GM10248 (cell line): ENCODE measurements at regions of chr6 and their contacts with region 1.

Region 1: DNA sequence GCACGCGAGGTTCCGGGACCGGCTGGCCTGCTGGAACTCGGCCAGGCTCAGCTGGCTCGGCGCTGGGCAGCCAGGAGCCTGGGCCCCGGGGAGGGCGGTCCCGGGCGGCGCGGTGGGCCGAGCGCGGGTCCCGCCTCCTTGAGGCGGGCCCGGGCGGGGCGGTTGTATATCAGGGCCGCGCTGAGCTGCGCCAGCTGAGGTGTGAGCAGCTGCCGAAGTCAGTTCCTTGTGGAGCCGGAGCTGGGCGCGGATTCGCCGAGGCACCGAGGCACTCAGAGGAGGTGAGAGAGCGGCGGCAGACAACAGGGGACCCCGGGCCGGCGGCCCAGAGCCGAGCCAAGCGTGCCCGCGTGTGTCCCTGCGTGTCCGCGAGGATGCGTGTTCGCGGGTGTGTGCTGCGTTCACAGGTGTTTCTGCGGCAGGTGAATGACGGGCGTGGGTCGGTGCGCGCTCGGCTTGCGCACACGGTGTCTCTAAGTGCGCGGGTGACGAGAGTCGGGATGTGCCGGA is at the start of gene CDKN1A:
- DNase-seq: peak; percentile 87
- CTCF ChIP-seq: no peak

Region 2: DNA sequence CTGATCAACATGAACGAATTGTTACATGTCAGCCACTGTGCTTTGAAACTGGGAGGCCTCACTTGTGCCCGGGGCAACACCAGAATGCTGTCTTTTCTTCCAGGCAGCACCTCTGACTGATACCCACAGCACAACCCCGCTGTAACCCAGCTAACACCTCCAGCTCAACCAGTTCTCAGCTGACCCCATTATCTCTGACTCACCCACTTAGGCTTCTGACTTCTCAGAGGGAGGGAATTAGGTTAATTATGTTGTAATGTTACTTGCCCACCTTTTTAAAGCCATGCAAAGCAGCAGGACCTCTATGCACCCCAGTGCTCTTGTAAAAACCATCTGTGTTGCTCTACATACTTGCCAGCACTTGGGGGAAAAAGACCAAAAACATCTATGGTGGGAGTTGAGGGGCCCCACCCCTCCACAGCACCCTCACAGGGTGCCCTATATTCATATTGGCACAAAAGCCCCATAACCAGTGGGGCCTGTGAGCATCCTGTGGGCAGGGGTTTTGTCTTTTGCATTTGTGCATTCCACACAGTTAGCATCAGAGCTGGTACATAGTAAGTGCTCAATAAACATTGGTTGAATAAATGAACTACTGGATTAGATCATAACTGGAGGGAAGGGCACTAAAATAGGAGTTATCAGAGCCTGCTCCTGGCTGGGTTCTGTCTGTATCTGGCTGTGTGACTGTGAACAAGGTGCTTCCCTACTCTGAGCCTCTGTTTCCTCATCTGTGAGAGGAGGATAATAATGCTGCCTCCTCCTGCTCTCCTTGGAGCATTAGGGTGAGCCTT is 364.2 kb before region 1 on chr6:
- CTCF ChIA-PET with region 1: no interaction called
- POLR2A ChIA-PET with region 1: interaction called, 12 read pairs
- DNase-seq: no peak
- CTCF ChIP-seq: no peak

Region 3: DNA sequence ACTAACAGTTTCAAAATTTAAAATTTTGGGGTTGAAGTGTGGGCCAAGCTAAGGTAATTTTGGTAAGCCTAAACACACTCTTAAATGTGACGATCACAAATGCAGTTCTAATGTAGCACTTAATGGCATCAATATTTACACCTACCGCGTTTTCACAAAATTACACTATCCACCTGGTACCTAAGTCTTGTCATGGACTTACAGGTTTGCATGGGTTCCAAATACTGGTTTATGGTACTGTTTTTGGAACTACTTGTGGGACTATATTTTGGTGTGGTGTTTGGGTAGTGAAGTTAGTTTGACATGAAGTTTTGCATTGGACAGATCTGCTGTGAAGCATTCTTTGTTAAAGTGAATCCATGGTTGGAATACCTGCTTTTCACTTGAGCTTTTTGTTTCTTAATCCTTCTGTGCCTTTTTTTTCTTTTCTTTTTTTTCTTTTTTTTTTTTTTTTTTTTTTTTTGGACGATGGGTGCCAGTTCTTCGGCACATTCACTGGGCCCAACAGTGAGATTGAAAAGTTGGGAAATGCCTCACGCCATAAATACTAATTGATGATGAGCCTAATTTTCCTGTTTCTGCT is 77.9 kb before region 1 on chr6:
- CTCF ChIA-PET with region 1: interaction called, 3 read pairs
- POLR2A ChIA-PET with region 1: interaction called, 11 read pairs
- DNase-seq: no peak
- CTCF ChIP-seq: no peak

Region 4: DNA sequence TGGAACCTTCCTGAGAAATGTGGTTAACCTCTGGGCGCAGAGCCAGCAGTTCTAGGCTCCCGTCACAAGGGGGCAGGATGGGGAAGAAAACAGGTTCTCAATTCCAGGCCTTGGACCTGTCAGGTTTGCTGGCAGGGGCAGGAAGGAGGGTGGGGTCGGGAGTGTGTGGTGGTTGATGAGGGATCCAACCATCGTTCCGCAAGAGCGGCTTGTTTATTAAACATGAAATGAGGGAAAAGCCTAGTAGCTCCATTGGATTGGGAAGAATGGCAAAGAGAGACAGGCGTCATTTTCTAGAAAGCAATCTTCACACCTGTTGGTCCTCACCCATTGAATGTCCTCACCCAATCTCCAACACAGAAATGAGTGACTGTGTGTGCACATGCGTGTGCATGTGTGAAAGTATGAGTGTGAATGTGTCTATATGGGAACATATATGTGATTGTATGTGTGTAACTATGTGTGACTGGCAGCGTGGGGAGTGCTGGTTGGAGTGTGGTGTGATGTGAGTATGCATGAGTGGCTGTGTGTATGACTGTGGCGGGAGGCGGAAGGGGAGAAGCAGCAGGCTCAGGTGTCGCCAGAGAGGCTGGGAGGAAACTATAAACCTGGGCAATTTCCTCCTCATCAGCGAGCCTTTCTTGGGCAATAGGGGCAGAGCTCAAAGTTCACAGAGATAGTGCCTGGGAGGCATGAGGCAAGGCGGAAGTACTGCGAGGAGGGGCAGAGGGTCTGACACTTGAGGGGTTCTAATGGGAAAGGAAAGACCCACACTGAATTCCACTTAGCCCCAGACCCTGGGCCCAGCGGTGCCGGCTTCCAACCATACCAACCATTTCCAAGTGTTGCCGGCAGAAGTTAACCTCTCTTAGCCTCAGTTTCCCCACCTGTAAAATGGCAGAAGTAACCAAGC is 54.8 kb before region 1 on chr6:
- CTCF ChIA-PET with region 1: interaction called, 55 read pairs
- POLR2A ChIA-PET with region 1: interaction called, 6 read pairs
- DNase-seq: peak; percentile 84
- CTCF ChIP-seq: peak; percentile 91

Region 5: DNA sequence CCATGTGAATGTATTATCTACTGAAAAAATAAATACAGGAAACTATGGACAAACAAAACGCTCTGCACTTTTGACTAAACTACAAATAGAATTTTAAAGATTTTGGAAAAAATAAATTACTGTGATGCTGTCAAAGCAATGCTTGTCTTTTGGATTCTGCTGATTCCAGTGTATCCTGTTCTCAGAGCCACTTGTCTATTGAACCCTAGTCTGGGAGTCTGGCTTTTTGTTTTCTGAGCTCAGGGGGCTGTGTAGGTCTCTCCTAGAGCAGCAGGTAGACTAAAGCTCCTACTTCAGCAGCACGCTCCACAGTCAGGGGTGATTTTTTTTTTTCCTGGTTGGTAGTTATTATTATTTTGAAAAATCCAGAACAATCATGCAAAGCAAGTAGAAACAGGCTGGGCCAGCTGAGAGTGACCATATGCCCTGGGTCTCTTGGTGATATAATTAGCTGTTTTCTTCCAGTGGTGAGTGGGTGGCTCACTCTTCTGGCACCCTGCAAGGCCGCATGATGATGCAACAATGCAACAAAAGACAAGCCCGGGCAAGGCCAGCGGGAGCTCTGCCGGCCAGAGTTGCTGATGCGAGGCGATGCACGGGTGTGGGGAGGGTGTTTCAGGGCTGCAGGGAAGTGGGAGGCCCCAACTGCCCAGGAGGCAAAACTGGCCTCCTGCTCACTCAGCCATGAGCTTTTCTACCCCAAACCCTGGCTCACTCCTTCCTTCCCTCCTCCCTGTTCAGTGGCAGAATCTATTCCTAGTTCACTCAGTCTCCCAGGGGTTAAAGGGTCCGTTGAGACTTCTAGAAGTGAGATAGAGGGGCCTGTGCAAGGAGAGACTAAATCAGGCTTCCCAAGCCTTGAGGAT is 11.6 kb before region 1 on chr6:
- CTCF ChIA-PET with region 1: interaction called, 104 read pairs
- POLR2A ChIA-PET with region 1: interaction called, 99 read pairs
- DNase-seq: peak; percentile 76
- CTCF ChIP-seq: no peak

Region 6: DNA sequence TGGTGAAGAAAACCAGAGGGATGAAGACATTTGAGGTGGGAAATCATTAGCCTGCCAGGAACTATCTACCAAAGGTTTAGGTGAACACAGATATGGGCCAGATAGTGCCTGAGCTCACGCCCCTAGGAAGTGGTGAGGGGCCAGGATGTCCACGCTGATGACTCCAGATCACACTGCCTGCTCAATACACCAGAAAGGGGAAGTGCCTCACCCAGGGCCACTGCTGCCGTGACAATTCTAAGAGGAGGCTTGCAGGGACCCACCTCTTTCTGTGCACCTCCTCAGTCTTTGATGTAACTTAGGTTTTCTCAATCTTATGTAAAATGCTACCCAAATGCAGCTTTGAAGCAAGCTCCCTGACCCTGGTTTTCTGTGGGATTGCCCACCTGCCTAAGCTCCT is 13.6 kb after region 1 on chr6:
- CTCF ChIA-PET with region 1: interaction called, 13 read pairs
- POLR2A ChIA-PET with region 1: interaction called, 5 read pairs
- DNase-seq: peak; percentile 79
- CTCF ChIP-seq: no peak

Region 7: GRCh38 chr6:36809941-36810803 is 131.6 kb after region 1 on chr6:
- CTCF ChIA-PET with region 1: no interaction called
- POLR2A ChIA-PET with region 1: no interaction called
- DNase-seq: no peak
- CTCF ChIP-seq: no peak